CD4-positive, alpha-beta memory T cell (primary cell): ENCODE measurements at regions of chr16 and their contacts with region 1.

Region 1: GRCh38 chr16:66588981-66589713 is 9.9 kb downstream of the CMTM2 start:
- DNase-seq: peak; percentile 64 to 74 (median 70)
- H3K4me3 ChIP-seq: no peak overlapping the region
- H3K4me3 Mint-ChIP-seq: peak overlapping the region; percentile 80 to 94 (median 87)
- H3K27ac ChIP-seq: no peak overlapping the region
- H3K27ac Mint-ChIP-seq: peak overlapping the region; percentile 48 to 96 (median 77)
- H3K4me1 ChIP-seq: peaks cover 20% of the 10 kb centered on the region
- H3K4me1 Mint-ChIP-seq: peaks cover 13 to 23% (median 19%) of the 10 kb centered on the region in 4 donors
- H3K27me3 ChIP-seq: no peaks in the 10 kb centered on the region
- H3K27me3 Mint-ChIP-seq: no peaks in the 10 kb centered on the region

Region 2: GRCh38 chr16:66474750-66475199 is 114.4 kb before region 1 on chr16:
- CTCF ChIA-PET with region 1: interaction called, 34 read pairs
- POLR2A ChIA-PET with region 1: interaction called, 5 read pairs
- intact Hi-C with region 1: loop called (anchors 1 kb)
- DNase-seq: peak; percentile 63 to 76 (median 70)
- H3K4me3 ChIP-seq: no peak overlapping the region
- H3K4me3 Mint-ChIP-seq: peak overlapping the region in 6 of 8 donors; percentile 9 to 63 (median 47)
- H3K27ac ChIP-seq: no peak overlapping the region
- H3K27ac Mint-ChIP-seq: peak overlapping the region; percentile 49 to 97 (median 81)
- H3K4me1 ChIP-seq: peaks cover 45% of the 10 kb centered on the region
- H3K4me1 Mint-ChIP-seq: peaks cover 21 to 49% (median 32%) of the 10 kb centered on the region in 4 donors
- H3K27me3 ChIP-seq: no peaks in the 10 kb centered on the region
- H3K27me3 Mint-ChIP-seq: peaks cover 0 to 1% of the 10 kb centered on the region in 2 donors

Region 3: GRCh38 chr16:66483689-66484481 is 105.3 kb before region 1 on chr16:
- CTCF ChIA-PET with region 1: interaction called, 34 read pairs
- POLR2A ChIA-PET with region 1: interaction called, 5 read pairs
- intact Hi-C with region 1: no loop called
- DNase-seq: peak; percentile 60 to 69 (median 64)
- H3K4me3 ChIP-seq: no peak overlapping the region
- H3K4me3 Mint-ChIP-seq: no peak overlapping the region
- H3K27ac ChIP-seq: no peak overlapping the region
- H3K27ac Mint-ChIP-seq: peak overlapping the region in 5 of 7 donors; percentile 27 to 68 (median 61)
- H3K4me1 ChIP-seq: peaks cover 16% of the 10 kb centered on the region
- H3K4me1 Mint-ChIP-seq: peaks cover 10 to 24% (median 13%) of the 10 kb centered on the region in 4 donors
- H3K27me3 ChIP-seq: no peaks in the 10 kb centered on the region
- H3K27me3 Mint-ChIP-seq: no peaks in the 10 kb centered on the region

Region 4: GRCh38 chr16:66639091-66639885 is 50.1 kb after region 1 on chr16:
- CTCF ChIA-PET with region 1: no interaction called
- POLR2A ChIA-PET with region 1: no interaction called
- intact Hi-C with region 1: no loop called
- DNase-seq: no peak
- H3K4me3 ChIP-seq: no peak overlapping the region
- H3K4me3 Mint-ChIP-seq: no peak overlapping the region
- H3K27ac ChIP-seq: no peak overlapping the region
- H3K27ac Mint-ChIP-seq: no peak overlapping the region
- H3K4me1 ChIP-seq: no peaks in the 10 kb centered on the region
- H3K4me1 Mint-ChIP-seq: no peaks in the 10 kb centered on the region
- H3K27me3 ChIP-seq: no peaks in the 10 kb centered on the region
- H3K27me3 Mint-ChIP-seq: peaks cover 0 to 3% of the 10 kb centered on the region in 2 donors